ENCODE measurements at regions of chr5 and their contacts with region 1.

Region 1: GRCh38 chr5:58886315-58887207 is 303.7 kb downstream of the RAB3C start:
- DNase-seq: peak; percentile 83
- ATAC-seq: peak; percentile 66
- H3K4me3 Mint-ChIP-seq: peak overlapping the region; percentile 3
- H3K27ac Mint-ChIP-seq: peak overlapping the region; percentile 83
- H3K4me1 Mint-ChIP-seq: peaks cover 41% of the 10 kb centered on the region
- H3K27me3 Mint-ChIP-seq: peaks cover 2% of the 10 kb centered on the region

Region 2: DNA sequence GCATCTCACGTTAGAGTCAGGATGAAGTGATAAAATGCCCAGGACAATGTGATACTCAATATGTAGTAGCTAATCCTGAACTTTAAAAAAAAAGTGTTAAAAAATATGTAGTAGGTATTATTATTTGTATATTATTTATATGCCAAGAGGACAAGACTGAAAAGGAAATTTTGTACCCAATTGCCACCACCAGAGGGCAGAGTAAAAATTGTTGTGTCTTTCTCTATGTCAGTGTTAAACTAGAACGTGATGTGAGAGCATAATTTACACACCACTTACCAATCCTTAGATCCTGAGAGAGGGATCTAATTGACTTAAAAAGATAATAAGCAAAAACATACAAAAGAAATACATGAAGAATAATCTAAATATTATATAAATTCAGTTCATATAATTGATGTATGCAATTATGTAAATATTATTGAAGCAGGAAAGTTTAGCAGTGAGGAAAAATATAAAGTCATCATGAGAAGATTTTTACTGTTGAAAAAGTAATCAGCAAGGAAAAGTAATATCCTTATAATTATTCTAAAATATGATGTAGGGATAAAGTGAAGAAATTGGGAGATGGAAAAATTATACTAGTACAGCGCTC is 14.8 kb before region 1 on chr5:
- CTCF ChIA-PET with region 1: interaction called, 33 read pairs
- POLR2A ChIA-PET with region 1: no interaction called
- intact Hi-C with region 1: no loop called
- DNase-seq: peak; percentile 44
- ATAC-seq: no peak
- H3K4me3 Mint-ChIP-seq: no peak overlapping the region
- H3K27ac Mint-ChIP-seq: no peak overlapping the region
- H3K4me1 Mint-ChIP-seq: no peaks in the 10 kb centered on the region
- H3K27me3 Mint-ChIP-seq: peaks cover 13% of the 10 kb centered on the region

Region 3: GRCh38 chr5:58933891-58934628 is 47.5 kb after region 1 on chr5:
- CTCF ChIA-PET with region 1: interaction called, 4 read pairs
- POLR2A ChIA-PET with region 1: no interaction called
- intact Hi-C with region 1: loop called in 1 of 2 experiments (anchors 2 kb)
- DNase-seq: peak; percentile 60
- ATAC-seq: peak; percentile 79
- H3K4me3 Mint-ChIP-seq: peak overlapping the region; percentile 3
- H3K27ac Mint-ChIP-seq: peak overlapping the region; percentile 59
- H3K4me1 Mint-ChIP-seq: peaks cover 43% of the 10 kb centered on the region
- H3K27me3 Mint-ChIP-seq: no peaks in the 10 kb centered on the region

Region 4: DNA sequence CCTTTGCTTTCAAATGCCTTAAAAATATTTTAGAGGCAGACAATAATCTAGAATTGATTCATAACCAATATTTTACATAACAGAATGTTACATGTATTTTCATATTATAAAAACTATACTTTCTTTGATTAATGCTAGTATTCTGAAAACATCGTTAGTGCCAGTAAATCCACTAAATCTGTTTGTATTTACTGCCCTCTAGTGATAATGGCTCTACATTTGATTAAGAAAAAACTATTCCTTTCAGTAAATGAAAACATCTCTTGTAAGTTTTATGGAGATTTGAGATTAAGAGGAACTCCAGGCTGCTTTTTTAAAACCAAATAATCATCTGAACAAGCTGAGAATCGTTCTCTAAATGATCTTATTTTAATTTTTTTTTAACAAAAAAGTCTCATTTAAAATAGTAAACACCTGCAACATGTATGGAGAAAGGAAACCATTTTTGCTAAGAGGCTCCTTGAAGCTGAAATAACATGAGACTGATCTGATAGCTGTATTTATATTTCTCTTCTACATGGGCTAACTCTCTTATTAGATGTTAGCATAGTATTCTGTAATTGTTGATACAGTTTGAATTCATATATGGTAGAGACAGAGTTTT is 121.0 kb after region 1 on chr5:
- CTCF ChIA-PET with region 1: interaction called, 21 read pairs
- POLR2A ChIA-PET with region 1: no interaction called
- intact Hi-C with region 1: loop called (anchors 1 kb)
- DNase-seq: no peak
- ATAC-seq: no peak
- H3K4me3 Mint-ChIP-seq: no peak overlapping the region
- H3K27ac Mint-ChIP-seq: no peak overlapping the region
- H3K4me1 Mint-ChIP-seq: peaks cover 73% of the 10 kb centered on the region
- H3K27me3 Mint-ChIP-seq: no peaks in the 10 kb centered on the region

Region 5: GRCh38 chr5:59126708-59127573 is 240.4 kb after region 1 on chr5:
- CTCF ChIA-PET with region 1: interaction called, 12 read pairs
- POLR2A ChIA-PET with region 1: interaction called, 5 read pairs
- intact Hi-C with region 1: loop called (anchors 2 kb)
- DNase-seq: no peak
- ATAC-seq: peak; percentile 7
- H3K4me3 Mint-ChIP-seq: no peak overlapping the region
- H3K27ac Mint-ChIP-seq: no peak overlapping the region
- H3K4me1 Mint-ChIP-seq: peaks cover 23% of the 10 kb centered on the region
- H3K27me3 Mint-ChIP-seq: no peaks in the 10 kb centered on the region

Region 6: GRCh38 chr5:59367791-59368394 is 481.3 kb after region 1 on chr5:
- CTCF ChIA-PET with region 1: interaction called, 3 read pairs
- POLR2A ChIA-PET with region 1: no interaction called
- intact Hi-C with region 1: loop called in 1 of 2 experiments (anchors 5 kb)
- DNase-seq: peak; percentile 72
- ATAC-seq: peak; percentile 65
- H3K4me3 Mint-ChIP-seq: no peak overlapping the region
- H3K27ac Mint-ChIP-seq: no peak overlapping the region
- H3K4me1 Mint-ChIP-seq: no peaks in the 10 kb centered on the region
- H3K27me3 Mint-ChIP-seq: peaks cover 4% of the 10 kb centered on the region